ENCODE measurements at regions of chr20 and their contacts with region 1.

Region 1: DNA sequence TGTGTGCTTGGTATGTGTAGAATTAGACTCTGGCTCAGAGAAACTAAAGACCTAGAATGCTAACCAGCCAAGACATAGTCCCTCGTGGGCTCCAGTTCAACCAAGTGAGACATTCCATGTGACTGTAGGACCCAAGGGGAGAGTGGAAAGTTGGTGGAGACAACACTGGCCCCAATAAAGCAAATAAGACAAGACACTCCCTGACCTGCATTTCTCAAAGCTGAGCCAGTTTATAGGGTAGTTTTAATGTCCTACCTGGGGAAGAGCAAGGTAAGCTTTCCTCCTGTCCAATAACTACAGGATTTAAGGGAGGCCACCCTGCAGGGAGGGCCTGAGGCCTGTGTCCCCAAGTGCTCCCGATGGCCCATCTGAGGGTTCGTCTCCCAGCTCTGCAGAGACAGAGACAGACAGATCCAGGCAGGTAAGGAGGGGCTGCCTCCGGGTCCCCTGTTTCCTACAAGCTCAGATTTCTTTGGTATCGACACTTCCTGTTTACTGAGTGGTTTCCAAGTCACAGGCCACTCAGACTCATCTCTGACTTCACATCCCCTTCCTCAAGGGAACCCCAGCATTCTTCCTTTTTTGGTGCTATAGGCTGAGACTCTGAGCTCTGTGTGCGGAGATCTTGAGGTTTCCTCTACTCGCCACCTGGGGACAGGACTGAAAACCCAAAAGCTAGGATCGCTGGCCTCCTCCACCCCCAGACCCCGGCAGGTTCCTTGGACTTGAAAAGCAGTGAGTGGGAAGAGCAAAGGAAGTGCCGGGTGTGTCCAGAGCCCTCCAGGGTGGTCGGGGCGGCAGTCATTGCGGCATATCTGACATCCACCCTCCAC is 92.4 kb downstream of the PRND start:
- DNase-seq: peak; percentile 70
- ATAC-seq: peak; percentile 49
- H3K4me3 Mint-ChIP-seq: peak overlapping the region; percentile 89
- H3K27ac Mint-ChIP-seq: peak overlapping the region; percentile 99
- H3K4me1 Mint-ChIP-seq: peaks cover 98% of the 10 kb centered on the region
- H3K27me3 Mint-ChIP-seq: no peaks in the 10 kb centered on the region
- CTCF ChIP-seq: no peak

Region 2: DNA sequence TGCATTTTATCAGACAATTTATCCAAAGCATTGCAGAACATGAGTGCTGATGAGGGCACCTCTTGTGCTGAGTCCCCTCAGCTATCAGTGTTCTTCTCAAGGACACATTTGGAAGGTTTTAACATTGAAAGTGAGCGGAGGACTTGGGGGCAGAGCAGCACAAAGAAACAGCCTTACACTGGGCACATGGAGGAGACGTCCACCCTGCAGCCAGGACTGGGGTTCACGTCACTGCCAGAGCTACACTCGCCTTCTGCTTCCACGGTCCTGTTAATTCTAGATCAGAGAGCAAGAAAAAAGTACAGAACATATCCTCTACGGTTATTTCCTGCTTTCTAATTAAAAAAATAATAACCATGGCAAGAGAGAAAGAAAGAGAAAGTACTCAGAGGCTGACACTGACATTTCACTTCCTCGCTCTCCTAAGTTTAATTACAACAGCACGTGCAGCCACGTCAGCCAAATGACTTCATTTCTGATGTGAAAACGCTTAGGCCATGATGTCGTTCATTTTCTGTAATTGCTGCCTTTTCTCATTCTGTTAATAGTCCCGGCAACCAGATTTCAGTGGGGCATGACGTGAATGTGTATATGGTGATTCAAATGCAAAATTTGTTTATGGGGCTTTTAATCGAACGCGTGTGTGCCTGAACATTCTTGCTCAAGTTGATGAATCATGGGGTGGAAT is 87.2 kb before region 1 on chr20:
- CTCF ChIA-PET with region 1: no interaction called
- POLR2A ChIA-PET with region 1: no interaction called
- intact Hi-C with region 1: loop called (anchors 1 kb)
- DNase-seq: no peak
- ATAC-seq: peak; percentile 80
- H3K4me3 Mint-ChIP-seq: peak overlapping the region; percentile 61
- H3K27ac Mint-ChIP-seq: peak overlapping the region; percentile 89
- H3K4me1 Mint-ChIP-seq: peaks cover 19% of the 10 kb centered on the region
- H3K27me3 Mint-ChIP-seq: no peaks in the 10 kb centered on the region
- CTCF ChIP-seq: no peak

Region 3: DNA sequence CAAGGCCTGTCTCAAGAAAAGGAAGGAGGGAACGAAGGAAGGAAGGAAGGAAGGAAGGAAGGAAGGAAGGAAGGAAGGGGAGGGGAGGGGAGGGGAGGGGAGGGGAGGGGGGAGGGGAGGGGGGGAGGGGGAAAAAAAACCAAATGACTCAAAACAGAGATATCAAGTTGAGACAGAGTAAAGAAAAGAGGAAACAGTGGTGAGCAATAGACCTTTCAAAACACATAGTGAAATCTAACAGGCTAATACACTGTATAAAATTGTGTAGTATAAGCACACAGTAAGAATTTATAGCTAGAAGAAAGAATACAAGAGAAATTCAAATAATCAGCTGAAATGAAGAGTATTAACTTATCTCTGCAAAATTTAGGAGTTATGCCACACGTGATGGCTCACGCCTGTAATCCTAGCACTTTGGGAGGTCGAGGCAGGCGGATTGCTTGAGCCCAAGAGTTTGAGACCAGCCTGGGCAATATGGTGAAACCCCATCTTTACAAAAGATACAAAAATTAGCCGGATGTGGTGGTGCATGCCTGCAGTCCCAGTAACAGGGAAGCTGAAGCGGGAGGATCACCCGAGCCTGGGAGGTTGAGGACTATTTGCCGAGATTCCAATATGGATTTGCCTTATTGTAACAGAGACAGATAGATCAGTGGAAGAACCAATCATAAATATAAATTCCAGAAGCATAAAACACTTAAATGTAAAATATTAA is 30.8 kb after region 1 on chr20:
- CTCF ChIA-PET with region 1: interaction called, 4 read pairs
- POLR2A ChIA-PET with region 1: interaction called, 26 read pairs
- intact Hi-C with region 1: loop called (anchors 1 kb)
- DNase-seq: no peak
- ATAC-seq: peak; percentile 86
- H3K4me3 Mint-ChIP-seq: peak overlapping the region; percentile 50
- H3K27ac Mint-ChIP-seq: peak overlapping the region; percentile 79
- H3K4me1 Mint-ChIP-seq: peaks cover 40% of the 10 kb centered on the region
- H3K27me3 Mint-ChIP-seq: no peaks in the 10 kb centered on the region
- CTCF ChIP-seq: no peak

Region 4: GRCh38 chr20:4966826-4967751 is 153.0 kb after region 1 on chr20:
- CTCF ChIA-PET with region 1: no interaction called
- POLR2A ChIA-PET with region 1: interaction called, 44 read pairs
- intact Hi-C with region 1: no loop called
- DNase-seq: no peak
- ATAC-seq: no peak
- H3K4me3 Mint-ChIP-seq: no peak overlapping the region
- H3K27ac Mint-ChIP-seq: peak overlapping the region; percentile 57
- H3K4me1 Mint-ChIP-seq: peaks cover 29% of the 10 kb centered on the region
- H3K27me3 Mint-ChIP-seq: no peaks in the 10 kb centered on the region
- CTCF ChIP-seq: no peak

Region 5: DNA sequence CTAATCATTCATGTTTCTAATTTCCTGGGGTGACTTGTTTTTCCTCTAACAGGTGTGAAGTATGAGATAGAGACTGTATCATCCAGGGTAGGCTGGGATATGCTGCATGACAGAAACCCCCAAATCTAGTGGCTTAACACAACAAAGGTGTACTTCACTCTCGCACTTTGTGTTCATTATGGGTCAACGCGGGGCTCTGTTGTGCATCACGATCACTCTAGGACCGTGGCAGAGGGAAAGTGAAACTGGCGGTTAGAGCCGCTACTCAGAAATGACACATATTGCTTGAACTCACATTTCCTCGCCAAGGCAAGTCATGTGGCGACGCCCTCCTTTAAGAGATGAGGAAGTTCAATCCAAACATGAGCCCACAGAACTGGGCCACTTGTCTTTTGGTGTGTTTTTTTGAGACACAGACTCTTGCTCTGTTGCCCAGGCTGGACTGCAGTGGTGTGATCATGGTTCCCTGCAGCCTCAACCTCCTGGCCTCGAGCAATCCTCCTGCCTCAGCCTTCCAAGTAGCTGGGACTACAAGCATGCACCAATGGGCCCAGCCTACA is 264.4 kb after region 1 on chr20:
- CTCF ChIA-PET with region 1: interaction called, 3 read pairs
- POLR2A ChIA-PET with region 1: interaction called, 5 read pairs
- intact Hi-C with region 1: loop called (anchors 2 kb)
- DNase-seq: peak; percentile 50
- ATAC-seq: peak; percentile 91
- H3K4me3 Mint-ChIP-seq: peak overlapping the region; percentile 71
- H3K27ac Mint-ChIP-seq: peak overlapping the region; percentile 92
- H3K4me1 Mint-ChIP-seq: peaks cover 55% of the 10 kb centered on the region
- H3K27me3 Mint-ChIP-seq: no peaks in the 10 kb centered on the region
- CTCF ChIP-seq: no peak

Region 6: GRCh38 chr20:5950271-5951031 is 1136.4 kb after region 1 on chr20 and contains the starts of genes MCM8 and TRMT6:
- CTCF ChIA-PET with region 1: no interaction called
- POLR2A ChIA-PET with region 1: no interaction called
- intact Hi-C with region 1: loop called (anchors 5 kb)
- DNase-seq: peak; percentile 94
- ATAC-seq: peak; percentile 97
- H3K4me3 Mint-ChIP-seq: peak within 1 kb of the TSS; percentile 93
- H3K27ac Mint-ChIP-seq: peak within 1 kb of the TSS; percentile 90
- H3K4me1 Mint-ChIP-seq: peaks cover 34% of the 10 kb centered on the region
- H3K27me3 Mint-ChIP-seq: no peaks in the 10 kb centered on the region
- CTCF ChIP-seq: no peak
- total RNA-seq, gene MCM8: 12.9 and 13.0 TPM in 2 replicates
- total RNA-seq, gene TRMT6: 21.0 and 25.5 TPM in 2 replicates